Activated naive CD4-positive, alpha-beta T cell treated with anti-CD3 and anti-CD28 coated beads for 36 hours (primary cell): ENCODE measurements at regions of chr3 and their contacts with region 1.

Region 1: GRCh38 chr3:187870360-187871203 is 125.3 kb upstream of the BCL6 start:
- DNase-seq: peak; percentile 34
- H3K4me3 Mint-ChIP-seq: no peak overlapping the region
- H3K27ac Mint-ChIP-seq: peak overlapping the region; percentile 37
- H3K4me1 Mint-ChIP-seq: peaks cover 12% of the 10 kb centered on the region
- H3K27me3 Mint-ChIP-seq: no peaks in the 10 kb centered on the region

Region 2: GRCh38 chr3:187770224-187770623 is 100.4 kb before region 1 on chr3:
- CTCF ChIA-PET with region 1: no interaction called
- intact Hi-C with region 1: loop called (anchors 1 kb)
- DNase-seq: peak; percentile 73
- H3K4me3 Mint-ChIP-seq: no peak overlapping the region
- H3K27ac Mint-ChIP-seq: peak overlapping the region; percentile 82
- H3K4me1 Mint-ChIP-seq: peaks cover 38% of the 10 kb centered on the region
- H3K27me3 Mint-ChIP-seq: no peaks in the 10 kb centered on the region